Heart right ventricle (tissue), 16 donors: ENCODE measurements at regions of chr2 and their contacts with region 1.

Region 1: GRCh38 chr2:232556426-232556825 is 5.9 kb downstream of the EIF4E2 start:
- DNase-seq: no peak
- ATAC-seq: no peak
- H3K4me3 ChIP-seq: no peak overlapping the region
- H3K27ac ChIP-seq: no peak overlapping the region
- H3K4me1 ChIP-seq: peaks cover 5 to 39% (median 22%) of the 10 kb centered on the region in 9 donors
- H3K27me3 ChIP-seq: no peaks in the 10 kb centered on the region
- CTCF ChIP-seq: no peak

Region 2: GRCh38 chr2:232418466-232419244 is 137.8 kb before region 1 on chr2:
- intact Hi-C with region 1: no loop called
- DNase-seq: no peak
- ATAC-seq: peak in 2 of 8 donors; percentile 20 to 30
- H3K4me3 ChIP-seq: peak overlapping the region in 9 of 10 donors; percentile 13 to 45 (median 27)
- H3K27ac ChIP-seq: no peak overlapping the region
- H3K4me1 ChIP-seq: peaks cover 3 to 28% (median 20%) of the 10 kb centered on the region in 9 donors
- H3K27me3 ChIP-seq: peaks cover 33 to 96% (median 87%) of the 10 kb centered on the region in 7 donors
- CTCF ChIP-seq: no peak

Region 3: DNA sequence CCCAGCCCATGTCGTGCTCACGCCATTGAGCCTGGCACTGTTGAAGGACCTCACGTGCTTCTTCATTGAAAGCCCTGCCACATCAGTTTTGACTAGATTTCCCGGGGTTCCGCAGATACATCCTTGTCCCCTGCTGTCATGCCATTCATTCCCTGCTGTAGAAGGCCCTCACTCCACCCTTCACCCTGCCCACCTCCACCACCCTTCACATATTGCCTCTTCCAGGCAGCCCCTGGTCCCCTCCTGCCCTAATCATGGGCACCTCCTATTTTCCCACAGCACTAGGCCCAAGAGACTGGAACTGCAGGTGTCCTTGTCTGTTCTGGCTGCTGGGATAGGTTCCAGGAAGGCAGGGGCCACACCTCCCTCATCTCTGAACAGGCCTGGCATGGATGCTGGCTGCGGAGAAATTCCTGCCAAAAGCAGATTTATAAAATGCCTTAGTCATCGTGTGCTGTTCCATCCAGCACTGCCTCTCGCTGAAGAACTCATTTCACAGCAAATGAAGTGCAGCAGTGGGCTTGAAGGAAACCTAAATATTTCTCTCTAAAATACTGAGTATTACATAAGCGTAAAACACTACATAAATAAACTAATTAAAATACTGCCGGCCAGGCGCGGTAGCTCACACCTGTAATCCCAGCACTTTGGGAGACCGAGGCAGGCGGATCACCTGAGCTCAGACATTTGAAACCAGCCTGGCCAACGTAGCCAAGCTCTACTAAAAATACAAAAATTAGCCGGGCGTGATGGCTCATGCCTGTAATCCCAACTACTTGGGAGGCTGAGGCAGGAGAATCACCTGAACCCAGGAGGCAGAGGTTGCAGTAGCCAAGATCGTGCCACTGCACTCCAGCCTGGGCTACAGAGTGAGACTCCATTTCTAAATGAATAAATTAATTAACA is 32.5 kb after region 1 on chr2:
- intact Hi-C with region 1: loop called in 1 of 10 experiments (anchors 1 kb)
- DNase-seq: peak in 1 of 2 donors; percentile 36
- ATAC-seq: peak; percentile 34 to 69 (median 50)
- H3K4me3 ChIP-seq: no peak overlapping the region
- H3K27ac ChIP-seq: peak overlapping the region in 2 of 10 donors; percentile 12 to 39
- H3K4me1 ChIP-seq: peaks cover 0 to 25% (median 15%) of the 10 kb centered on the region in 9 donors
- H3K27me3 ChIP-seq: no peaks in the 10 kb centered on the region
- CTCF ChIP-seq: no peak